Activated CD8-positive, alpha-beta T cell treated with anti-CD3 and anti-CD28 coated beads for 36 hours (primary cell): ENCODE measurements at regions of chr14 and their contacts with region 1.

Region 1: GRCh38 chr14:24160850-24161804 is at the start of gene IRF9:
- DNase-seq: peak; percentile 99
- ATAC-seq: peak; percentile 88
- H3K4me3 Mint-ChIP-seq: peak within 1 kb of the TSS; percentile 91
- H3K27ac Mint-ChIP-seq: peak within 1 kb of the TSS; percentile 99
- H3K4me1 Mint-ChIP-seq: peaks cover 39% of the 10 kb centered on the region
- H3K27me3 Mint-ChIP-seq: no peaks in the 10 kb centered on the region
- CTCF ChIP-seq: peak; percentile 81
- total RNA-seq, gene IRF9: 112 to 118 TPM

Region 2: DNA sequence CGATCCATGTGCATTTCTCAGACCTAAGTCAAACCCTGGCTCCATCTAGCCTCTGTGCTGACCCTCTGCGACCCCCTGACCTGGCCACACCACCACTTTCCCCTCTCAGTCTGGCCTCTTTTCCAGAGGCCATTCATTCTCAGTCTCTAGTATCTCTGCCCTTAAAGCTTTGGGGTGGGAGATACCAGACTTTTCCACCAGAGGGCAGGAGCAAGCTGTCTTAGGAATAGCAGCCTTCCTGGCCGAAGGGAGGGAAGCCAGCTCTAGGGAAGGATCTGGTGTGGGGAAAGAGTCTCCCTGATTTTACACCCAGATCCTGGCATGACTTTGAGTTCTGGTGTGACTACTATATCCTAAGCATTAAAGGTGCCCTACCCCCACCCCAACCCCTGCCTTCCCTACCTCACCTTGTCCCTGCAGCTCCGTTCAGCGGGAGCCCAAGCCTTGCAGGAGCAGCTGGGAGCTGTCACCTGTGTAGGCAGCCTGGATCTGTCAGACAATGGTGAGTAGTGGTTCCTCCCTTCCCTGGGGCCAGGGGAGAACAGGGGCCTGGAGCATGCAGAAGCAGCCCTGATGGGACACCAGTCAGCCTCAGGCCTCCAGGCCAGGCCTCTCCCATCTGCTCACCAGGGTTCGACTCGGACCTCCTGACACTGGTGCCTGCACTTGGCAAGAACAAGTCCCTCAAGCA is 102.7 kb before region 1 on chr14:
- CTCF ChIA-PET with region 1: interaction called, 39 read pairs
- POLR2A ChIA-PET with region 1: interaction called, 5 read pairs
- intact Hi-C with region 1: no loop called
- DNase-seq: peak; percentile 85
- ATAC-seq: peak; percentile 80
- H3K4me3 Mint-ChIP-seq: no peak overlapping the region
- H3K27ac Mint-ChIP-seq: peak overlapping the region; percentile 85
- H3K4me1 Mint-ChIP-seq: peaks cover 6% of the 10 kb centered on the region
- H3K27me3 Mint-ChIP-seq: no peaks in the 10 kb centered on the region
- CTCF ChIP-seq: peak; percentile 95

Region 3: GRCh38 chr14:24114536-24115450 is 46.3 kb before region 1 on chr14 and contains the starts of genes DCAF11 and NRL:
- CTCF ChIA-PET with region 1: interaction called, 47 read pairs
- POLR2A ChIA-PET with region 1: interaction called, 24 read pairs
- intact Hi-C with region 1: no loop called
- DNase-seq: peak; percentile 99
- ATAC-seq: peak; percentile 88
- H3K4me3 Mint-ChIP-seq: peak within 1 kb of the TSS; percentile 98
- H3K27ac Mint-ChIP-seq: peak within 1 kb of the TSS; percentile 99
- H3K4me1 Mint-ChIP-seq: peaks cover 20% of the 10 kb centered on the region
- H3K27me3 Mint-ChIP-seq: no peaks in the 10 kb centered on the region
- CTCF ChIP-seq: no peak
- total RNA-seq, gene DCAF11: 59.9 to 63.9 TPM
- total RNA-seq, gene NRL: 1.8 to 2.5 TPM

Region 4: GRCh38 chr14:24146978-24147760 is 14.0 kb before region 1 on chr14 and contains the start of gene RNF31:
- CTCF ChIA-PET with region 1: interaction called, 91 read pairs
- POLR2A ChIA-PET with region 1: interaction called, 178 read pairs
- intact Hi-C with region 1: no loop called
- DNase-seq: peak; percentile 100
- ATAC-seq: peak; percentile 87
- H3K4me3 Mint-ChIP-seq: peak within 1 kb of the TSS; percentile 89
- H3K27ac Mint-ChIP-seq: peak within 1 kb of the TSS; percentile 98
- H3K4me1 Mint-ChIP-seq: peaks cover 58% of the 10 kb centered on the region
- H3K27me3 Mint-ChIP-seq: no peaks in the 10 kb centered on the region
- CTCF ChIP-seq: no peak
- total RNA-seq, gene RNF31: 71.6 to 75.0 TPM

Region 5: DNA sequence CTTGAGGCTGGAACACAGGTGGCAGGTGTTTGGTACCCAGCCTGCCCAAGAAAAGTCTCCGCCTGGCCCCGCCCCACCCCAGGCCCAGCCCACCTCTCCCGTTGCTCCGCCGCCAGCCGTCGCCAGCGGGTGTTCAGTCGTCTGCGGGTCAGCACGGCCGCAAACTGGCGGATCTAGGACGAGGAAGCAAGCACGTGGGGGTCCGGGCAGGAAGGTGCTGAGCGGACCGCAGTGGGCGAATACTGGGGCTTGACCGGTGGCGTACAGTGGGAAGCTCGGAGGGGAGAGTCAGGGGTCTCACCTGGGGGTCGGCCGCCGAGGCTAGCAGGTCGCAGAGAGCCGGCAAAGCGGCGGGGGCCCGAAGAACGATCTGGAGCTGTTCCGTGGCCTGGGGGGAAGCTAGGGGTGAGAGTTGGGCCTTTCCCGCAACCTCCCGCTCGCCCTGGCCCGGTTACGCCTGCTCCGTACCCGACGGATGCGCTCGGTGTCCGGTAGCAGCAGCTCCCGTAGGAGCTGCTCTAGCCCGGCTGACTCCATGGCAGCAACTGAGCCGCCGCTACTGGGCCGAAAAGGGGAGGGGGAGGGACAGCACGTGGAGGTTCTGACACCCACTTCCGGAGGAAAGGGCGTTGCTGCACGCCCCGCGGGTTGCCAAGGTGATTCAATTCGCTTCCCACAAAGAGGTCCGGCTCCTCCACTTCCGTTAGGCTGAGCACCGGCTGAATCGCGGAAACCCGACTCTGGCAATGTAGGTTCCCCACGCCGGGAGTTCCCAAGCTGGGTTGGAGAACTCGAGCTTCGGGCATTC is 27.3 kb after region 1 on chr14 and contains the start of gene IPO4:
- CTCF ChIA-PET with region 1: interaction called, 15 read pairs
- POLR2A ChIA-PET with region 1: interaction called, 89 read pairs
- intact Hi-C with region 1: no loop called
- DNase-seq: peak; percentile 96
- ATAC-seq: peak; percentile 95
- H3K4me3 Mint-ChIP-seq: peak within 1 kb of the TSS; percentile 92
- H3K27ac Mint-ChIP-seq: peak within 1 kb of the TSS; percentile 85
- H3K4me1 Mint-ChIP-seq: peaks cover 41% of the 10 kb centered on the region
- H3K27me3 Mint-ChIP-seq: no peaks in the 10 kb centered on the region
- CTCF ChIP-seq: no peak
- total RNA-seq, gene IPO4: 98.4 to 102 TPM

Region 6: GRCh38 chr14:24241829-24242443 is 80.8 kb after region 1 on chr14:
- CTCF ChIA-PET with region 1: interaction called, 10 read pairs
- POLR2A ChIA-PET with region 1: interaction called, 9 read pairs
- intact Hi-C with region 1: no loop called
- DNase-seq: peak; percentile 93
- ATAC-seq: peak; percentile 84
- H3K4me3 Mint-ChIP-seq: peak overlapping the region; percentile 96
- H3K27ac Mint-ChIP-seq: peak overlapping the region; percentile 98
- H3K4me1 Mint-ChIP-seq: peaks cover 54% of the 10 kb centered on the region
- H3K27me3 Mint-ChIP-seq: no peaks in the 10 kb centered on the region
- CTCF ChIP-seq: no peak

Region 7: DNA sequence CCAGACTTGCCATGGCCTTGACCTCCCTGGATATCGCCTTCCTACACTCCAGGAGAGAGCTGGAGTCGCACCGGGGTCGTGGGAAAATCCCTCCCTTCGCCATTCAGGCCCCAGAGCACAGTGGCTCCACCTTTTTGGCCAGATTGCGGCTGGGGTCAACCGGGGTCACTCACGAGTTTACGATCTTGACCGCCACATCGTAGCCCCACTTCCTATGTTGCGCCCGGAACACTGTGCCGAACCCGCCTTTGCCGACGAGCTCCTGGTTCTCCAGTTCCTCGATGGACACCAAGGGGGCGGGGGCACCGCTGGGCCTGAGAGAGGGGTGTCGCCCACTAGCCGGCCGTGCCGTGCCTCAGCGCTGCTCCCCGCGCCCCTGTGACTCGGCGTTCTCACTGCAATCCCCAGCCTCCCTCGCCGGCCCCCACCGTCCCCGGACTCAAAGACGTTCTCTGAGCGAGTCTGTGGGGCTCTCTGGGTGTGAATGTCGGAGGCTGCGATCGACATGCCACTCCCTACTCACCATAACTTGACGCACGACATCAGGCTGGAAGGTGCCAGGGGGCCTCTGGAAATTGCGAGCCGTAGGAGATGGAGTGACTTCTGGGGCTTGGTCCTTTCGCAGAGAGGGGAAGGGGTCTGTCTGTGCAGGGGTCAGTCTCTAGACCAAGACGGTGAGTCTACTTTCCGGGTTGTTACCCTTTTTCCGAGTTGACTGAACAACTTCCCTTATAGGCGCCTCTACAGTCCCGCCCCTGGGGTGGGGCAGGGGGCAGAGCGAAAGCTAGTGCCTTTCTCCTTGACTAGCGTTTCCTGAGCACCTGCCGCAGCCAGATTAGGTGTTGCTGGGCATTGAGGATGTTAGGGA is 178.4 kb after region 1 on chr14 and contains the start of gene RIPK3:
- CTCF ChIA-PET with region 1: no interaction called
- POLR2A ChIA-PET with region 1: no interaction called
- intact Hi-C with region 1: no loop called
- DNase-seq: peak; percentile 81
- ATAC-seq: peak; percentile 94
- H3K4me3 Mint-ChIP-seq: peak within 1 kb of the TSS; percentile 85
- H3K27ac Mint-ChIP-seq: peak within 1 kb of the TSS; percentile 74
- H3K4me1 Mint-ChIP-seq: peaks cover 18% of the 10 kb centered on the region
- H3K27me3 Mint-ChIP-seq: peaks cover 12% of the 10 kb centered on the region
- CTCF ChIP-seq: no peak
- total RNA-seq, gene RIPK3: 5.9 to 6.5 TPM